Sigmoid colon (tissue), 7 donors: ENCODE measurements at regions of chr1 and their contacts with region 1.

Region 1: DNA sequence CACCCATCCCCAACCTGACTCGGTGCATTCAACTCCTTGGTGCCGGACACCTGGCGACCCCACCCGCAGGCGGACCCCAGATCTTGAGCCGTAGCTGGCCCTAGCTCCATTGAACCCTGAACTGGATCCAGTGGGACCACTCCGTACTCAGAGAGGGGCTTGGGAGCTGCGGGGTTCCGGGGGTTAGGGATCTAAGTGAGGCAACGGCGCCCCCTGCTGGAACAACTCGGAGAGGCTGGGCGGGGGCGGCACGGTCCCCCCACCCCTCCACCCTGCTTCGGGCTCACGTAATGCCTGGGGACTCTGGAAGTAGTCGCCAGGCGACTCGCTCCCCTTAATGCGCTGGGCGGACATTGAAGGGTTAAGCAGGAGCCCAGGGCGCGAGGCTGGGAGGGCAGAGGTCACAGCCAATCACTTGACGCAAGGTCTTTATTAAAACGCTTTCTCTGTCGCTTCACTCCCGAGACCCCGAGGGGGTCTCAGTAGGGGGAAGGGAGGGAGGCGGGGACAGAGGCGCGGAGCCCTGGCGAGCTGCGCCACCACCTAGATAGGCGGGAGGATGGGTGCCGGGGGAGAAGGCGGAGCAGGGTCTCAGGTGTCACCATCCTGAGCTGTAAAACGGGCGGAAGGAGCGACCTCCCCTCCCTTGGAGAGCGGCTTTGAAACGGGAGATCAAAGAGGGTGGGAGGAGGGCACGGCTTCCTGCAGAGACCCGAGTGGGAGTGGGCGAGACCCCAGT is 704 bp upstream of the CRABP2 start:
- DNase-seq: peak; percentile 88
- H3K4me3 ChIP-seq: peak overlapping the region; percentile 34 to 55 (median 44)
- H3K27ac ChIP-seq: peak overlapping the region; percentile 81 to 87 (median 84)
- H3K4me1 ChIP-seq: peaks cover 0 to 66% (median 65%) of the 10 kb centered on the region in 4 donors
- H3K27me3 ChIP-seq: peaks cover 0 to 6% (median 0%) of the 10 kb centered on the region in 3 donors
- CTCF ChIP-seq: peak; percentile 66 to 86 (median 74)
- EP300 ChIP-seq: no peak
- POLR2A ChIP-seq: no peak

Region 2: DNA sequence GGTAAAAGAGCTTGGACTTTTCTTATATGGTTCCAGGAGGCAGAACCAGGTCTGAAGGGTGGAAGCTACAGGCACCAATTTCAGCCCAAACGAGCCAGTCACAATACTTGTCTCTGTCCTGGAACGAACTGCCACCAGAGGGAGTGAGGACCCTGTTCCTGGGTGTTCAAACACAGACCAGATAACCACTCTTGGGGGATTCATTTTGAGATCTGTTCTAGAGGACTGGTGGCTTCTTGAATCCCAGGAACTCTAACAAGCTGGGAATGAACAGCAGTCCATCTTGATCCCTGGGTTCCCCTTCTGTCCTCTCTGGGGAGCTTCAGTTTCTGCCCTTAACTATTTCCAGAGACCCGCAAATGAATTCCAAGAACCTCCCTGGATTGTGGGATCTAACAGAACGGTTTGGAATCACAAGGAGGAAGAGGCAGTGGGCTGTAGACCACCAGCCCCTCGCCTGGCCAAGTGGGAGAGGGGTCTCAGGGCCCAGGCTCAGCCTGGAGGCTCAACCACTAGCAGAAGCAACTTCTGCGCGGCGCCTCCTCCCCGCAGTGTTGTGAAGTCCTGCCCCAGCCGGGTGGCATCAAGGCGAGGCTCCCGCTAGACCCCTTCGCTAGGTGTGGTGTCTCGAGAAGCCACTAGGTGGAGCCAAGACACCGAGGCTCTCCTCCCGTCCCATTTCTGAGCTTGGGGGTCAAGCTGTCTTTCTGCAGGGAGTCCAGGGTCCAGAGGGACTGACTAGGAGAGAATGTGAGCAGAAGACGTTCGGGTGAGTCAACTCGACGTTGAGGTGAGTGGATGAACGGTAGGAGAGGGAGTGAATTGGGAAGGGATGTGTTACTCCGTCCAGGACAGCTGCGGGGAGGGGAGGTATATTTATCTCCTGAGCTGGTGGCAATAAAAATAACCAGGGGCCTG is 16.8 kb before region 1 on chr1:
- intact Hi-C with region 1: loop called (anchors 2 kb)
- DNase-seq: peak; percentile 91
- H3K4me3 ChIP-seq: peak overlapping the region in 2 of 4 donors; percentile 0 to 4
- H3K27ac ChIP-seq: peak overlapping the region in 1 of 4 donors; percentile 1
- H3K4me1 ChIP-seq: peaks cover 0 to 26% (median 13%) of the 10 kb centered on the region in 4 donors
- H3K27me3 ChIP-seq: peaks cover 4 to 56% (median 18%) of the 10 kb centered on the region in 3 donors
- CTCF ChIP-seq: peak; percentile 89 to 95 (median 92)
- EP300 ChIP-seq: no peak
- POLR2A ChIP-seq: no peak

Region 3: DNA sequence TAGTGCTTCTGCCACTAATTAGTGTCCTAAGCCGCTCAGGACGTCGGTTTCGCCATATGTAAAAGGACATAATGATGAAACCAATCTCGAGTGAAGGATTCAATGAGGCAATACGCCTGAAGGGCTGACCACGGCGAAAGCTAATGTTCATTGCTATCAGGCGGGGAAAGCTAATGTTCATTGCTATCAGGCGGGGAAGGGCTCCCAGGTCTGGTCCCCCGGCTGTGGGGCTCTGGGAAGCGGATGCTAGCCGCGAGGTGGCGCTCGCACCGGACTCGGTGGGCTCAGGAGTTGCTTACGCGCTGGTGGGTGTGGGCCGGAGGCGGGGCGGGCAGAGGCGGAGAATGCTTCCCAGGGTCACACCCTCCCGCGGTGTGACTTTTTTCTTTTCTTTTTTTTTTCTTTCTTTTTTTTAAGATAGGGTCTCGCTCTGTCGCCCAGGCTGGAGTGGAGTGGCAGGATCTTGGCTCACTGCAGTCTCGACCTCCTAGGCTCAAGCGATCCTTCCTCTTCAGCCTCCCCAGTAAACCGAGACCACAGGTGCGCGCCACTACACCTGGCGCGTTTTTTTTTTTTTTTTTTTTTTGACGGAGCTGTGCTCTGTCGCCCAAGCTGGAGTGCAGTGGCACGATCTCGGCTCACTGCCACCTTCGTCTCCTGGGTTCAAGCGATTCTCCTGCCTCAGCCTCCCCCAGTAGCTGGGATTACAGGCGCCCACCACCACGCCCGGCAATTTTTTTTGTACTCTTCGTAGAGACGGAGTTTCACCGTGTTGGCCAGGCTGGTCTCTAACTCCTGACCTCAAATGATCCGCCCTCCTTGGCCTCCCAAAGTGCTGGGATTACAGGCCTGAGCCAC is 186.3 kb after region 1 on chr1:
- intact Hi-C with region 1: loop called (anchors 10 kb)
- DNase-seq: peak; percentile 95
- H3K4me3 ChIP-seq: peak overlapping the region; percentile 7 to 45 (median 44)
- H3K27ac ChIP-seq: peak overlapping the region; percentile 72 to 83 (median 77)
- H3K4me1 ChIP-seq: peaks cover 0 to 25% (median 15%) of the 10 kb centered on the region in 4 donors
- H3K27me3 ChIP-seq: peaks cover 18 to 31% (median 22%) of the 10 kb centered on the region in 3 donors
- CTCF ChIP-seq: peak; percentile 14 to 77 (median 60)
- EP300 ChIP-seq: no peak
- POLR2A ChIP-seq: no peak